Motor neuron (in vitro differentiated cells): ENCODE measurements at regions of chr11 and their contacts with region 1.

Region 1: DNA sequence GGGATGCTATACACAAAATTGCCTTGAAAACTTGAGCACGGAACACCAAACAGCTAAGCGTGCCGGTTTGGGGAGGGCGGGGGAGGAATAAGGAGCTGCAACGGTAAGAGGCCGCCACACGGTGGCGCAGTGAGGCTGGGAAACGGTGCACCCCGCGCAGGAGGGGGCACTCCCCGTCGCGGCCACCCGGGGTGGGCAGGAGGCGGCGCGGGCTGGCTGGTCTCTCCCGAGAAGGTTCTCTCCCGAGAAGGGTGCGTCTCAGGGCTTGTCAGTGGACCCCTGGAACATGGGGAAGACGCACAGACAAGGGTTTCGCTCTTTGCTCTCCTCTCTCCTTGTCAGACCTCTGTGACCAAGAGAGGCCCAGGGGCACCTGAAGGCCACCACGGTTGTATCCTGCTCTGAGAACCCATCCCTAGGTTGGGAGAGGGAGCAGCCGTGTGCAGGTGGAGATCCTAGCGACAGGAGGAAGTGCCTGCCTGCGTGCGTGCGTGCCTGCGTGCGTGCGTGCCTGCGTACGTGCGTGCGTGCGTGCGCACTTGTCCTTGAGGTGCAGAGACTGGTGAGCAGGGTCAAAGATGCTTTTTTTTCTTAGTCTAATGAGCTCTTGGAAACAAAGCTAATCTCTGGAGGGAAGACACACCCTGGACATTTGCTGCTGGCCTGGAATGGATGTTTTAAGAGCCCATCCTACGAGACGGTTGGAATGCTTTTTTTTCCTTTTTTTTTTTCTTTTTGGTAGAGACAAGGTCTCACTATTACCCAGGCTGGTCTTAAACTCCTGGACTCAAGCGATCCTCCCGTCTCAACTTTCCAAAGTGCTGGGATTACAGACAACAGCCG is 18.1 kb upstream of the JAM3 start:
- ATAC-seq: peak; percentile 43 to 91 (median 86)
- H3K4me3 ChIP-seq: peak overlapping the region in 1 of 5 donors; percentile 18
- H3K27ac ChIP-seq: no peak overlapping the region
- H3K4me1 ChIP-seq: peaks cover 6 to 19% of the 10 kb centered on the region in 2 donors

Region 2: GRCh38 chr11:133441964-133442660 is 608.6 kb before region 1 on chr11:
- in situ Hi-C with region 1: no loop called
- ATAC-seq: no peak
- H3K4me3 ChIP-seq: no peak overlapping the region
- H3K27ac ChIP-seq: no peak overlapping the region
- H3K4me1 ChIP-seq: peaks cover 6 to 9% of the 10 kb centered on the region in 2 donors

Region 3: DNA sequence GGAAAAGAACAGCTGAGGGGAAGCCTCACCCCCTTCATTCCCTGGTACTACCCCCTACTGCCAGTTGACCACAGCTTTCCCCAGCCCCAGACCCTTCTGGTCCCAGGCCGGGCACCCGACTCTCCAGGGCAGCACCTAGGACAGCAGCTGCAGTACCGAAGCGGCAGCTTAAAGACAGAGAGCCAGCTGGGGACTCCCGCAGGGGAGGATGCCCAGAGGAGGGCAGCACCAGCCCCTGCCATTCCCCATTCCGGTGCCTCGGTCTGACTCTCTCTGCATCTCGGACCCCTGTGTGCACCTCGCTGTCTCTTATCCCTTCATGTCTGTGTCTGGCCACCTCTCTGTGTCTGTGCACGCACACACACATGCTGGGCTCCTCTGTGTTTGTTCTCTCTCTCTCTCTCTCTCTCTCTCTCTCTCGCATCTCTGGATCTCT is 103.4 kb before region 1 on chr11:
- in situ Hi-C with region 1: loop called in 6 of 9 experiments (anchors 5 to 25 kb)
- ATAC-seq: peak; percentile 17 to 94 (median 47)
- H3K4me3 ChIP-seq: peak overlapping the region in 3 of 5 donors; percentile 9 to 24 (median 14)
- H3K27ac ChIP-seq: peak overlapping the region; percentile 83 to 86
- H3K4me1 ChIP-seq: peaks cover 73 to 75% of the 10 kb centered on the region in 2 donors

Region 4: GRCh38 chr11:133966921-133967598 is 83.7 kb before region 1 on chr11:
- in situ Hi-C with region 1: no loop called
- ATAC-seq: peak in 5 of 8 experiments; percentile 12 to 82 (median 19)
- H3K4me3 ChIP-seq: no peak overlapping the region
- H3K27ac ChIP-seq: peak overlapping the region; percentile 73 to 80
- H3K4me1 ChIP-seq: peaks cover 51 to 58% of the 10 kb centered on the region in 2 donors

Region 5: GRCh38 chr11:134139873-134140331 is 89.1 kb after region 1 on chr11:
- in situ Hi-C with region 1: loop called in 4 of 9 experiments (anchors 5 to 10 kb)
- ATAC-seq: peak; percentile 67 to 94 (median 84)
- H3K4me3 ChIP-seq: no peak overlapping the region
- H3K27ac ChIP-seq: no peak overlapping the region
- H3K4me1 ChIP-seq: peaks cover 0 to 5% of the 10 kb centered on the region in 2 donors